ENCODE measurements at regions of chr12 and their contacts with region 1.

Region 1: GRCh38 chr12:107027636-107028053 is 40.7 kb upstream of the MTERF2 start:
- DNase-seq: no peak
- H3K4me3 ChIP-seq: no peak overlapping the region
- H3K27ac ChIP-seq: peak overlapping the region; percentile 54 to 74
- H3K4me1 ChIP-seq: peaks cover 0 to 20% of the 10 kb centered on the region in 2 donors
- H3K27me3 ChIP-seq: no peaks in the 10 kb centered on the region
- CTCF ChIP-seq: no peak

Region 2: DNA sequence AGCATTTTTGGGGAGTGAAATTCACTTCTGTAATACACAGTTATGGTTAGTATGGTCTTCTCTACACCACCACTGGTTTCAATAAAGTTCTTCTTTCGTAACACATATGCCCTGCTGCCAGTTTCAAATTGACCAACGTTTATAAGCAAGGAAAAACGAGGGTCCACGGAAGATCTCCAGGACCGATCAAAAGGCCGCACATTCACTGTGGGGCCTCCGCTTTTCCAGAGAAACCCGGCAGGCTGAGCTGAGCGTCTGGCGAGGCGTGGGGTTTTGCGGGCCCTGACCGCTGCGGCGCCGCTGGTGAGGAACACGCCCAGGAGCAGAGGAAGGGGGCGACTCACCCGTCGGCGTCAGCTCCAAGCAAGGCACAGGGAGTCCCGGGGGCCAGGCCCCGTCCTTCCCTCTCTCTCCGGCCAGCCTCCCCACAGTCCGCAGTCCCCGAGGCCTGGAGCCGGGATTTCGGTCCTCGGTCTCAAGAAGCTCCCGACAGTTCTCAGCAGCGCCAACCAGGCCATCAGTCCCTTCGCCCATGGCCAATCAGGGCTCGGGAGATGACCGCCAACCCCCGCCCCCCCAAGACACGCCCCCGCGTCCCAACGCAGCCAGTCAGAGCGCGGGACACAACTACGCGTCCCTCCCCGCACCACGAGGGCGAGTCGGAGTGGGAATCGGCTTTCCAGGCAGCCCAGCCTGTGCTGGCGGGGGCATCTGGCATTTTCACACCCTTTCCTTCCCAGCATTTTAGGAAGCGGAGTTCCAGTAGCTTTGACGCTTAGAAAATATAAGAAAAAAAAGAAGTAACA is 40.8 kb before region 1 on chr12 and contains the start of gene MTERF2:
- intact Hi-C with region 1: loop called (anchors 2 kb)
- DNase-seq: peak; percentile 71 to 97
- H3K4me3 ChIP-seq: peak within 1 kb of the TSS; percentile 69 to 77
- H3K27ac ChIP-seq: peak within 1 kb of the TSS; percentile 91 to 93
- H3K4me1 ChIP-seq: peaks cover 12 to 16% of the 10 kb centered on the region in 2 donors
- H3K27me3 ChIP-seq: no peaks in the 10 kb centered on the region
- CTCF ChIP-seq: no peak
- total RNA-seq, gene MTERF2: 3.1 TPM

Measured in ascending aorta (tissue), 2 donors.